Activated CD4-positive, alpha-beta memory T cell treated with anti-CD3 and anti-CD28 coated beads for 36 hours (primary cell): ENCODE measurements at regions of chr17 and their contacts with region 1.

Region 1: GRCh38 chr17:57783106-57783742 is 38.1 kb upstream of the CCDC182 start:
- DNase-seq: peak; percentile 86
- H3K4me3 Mint-ChIP-seq: no peak overlapping the region
- H3K27ac Mint-ChIP-seq: no peak overlapping the region
- H3K4me1 Mint-ChIP-seq: no peaks in the 10 kb centered on the region
- H3K27me3 Mint-ChIP-seq: peaks cover 19% of the 10 kb centered on the region

Region 2: DNA sequence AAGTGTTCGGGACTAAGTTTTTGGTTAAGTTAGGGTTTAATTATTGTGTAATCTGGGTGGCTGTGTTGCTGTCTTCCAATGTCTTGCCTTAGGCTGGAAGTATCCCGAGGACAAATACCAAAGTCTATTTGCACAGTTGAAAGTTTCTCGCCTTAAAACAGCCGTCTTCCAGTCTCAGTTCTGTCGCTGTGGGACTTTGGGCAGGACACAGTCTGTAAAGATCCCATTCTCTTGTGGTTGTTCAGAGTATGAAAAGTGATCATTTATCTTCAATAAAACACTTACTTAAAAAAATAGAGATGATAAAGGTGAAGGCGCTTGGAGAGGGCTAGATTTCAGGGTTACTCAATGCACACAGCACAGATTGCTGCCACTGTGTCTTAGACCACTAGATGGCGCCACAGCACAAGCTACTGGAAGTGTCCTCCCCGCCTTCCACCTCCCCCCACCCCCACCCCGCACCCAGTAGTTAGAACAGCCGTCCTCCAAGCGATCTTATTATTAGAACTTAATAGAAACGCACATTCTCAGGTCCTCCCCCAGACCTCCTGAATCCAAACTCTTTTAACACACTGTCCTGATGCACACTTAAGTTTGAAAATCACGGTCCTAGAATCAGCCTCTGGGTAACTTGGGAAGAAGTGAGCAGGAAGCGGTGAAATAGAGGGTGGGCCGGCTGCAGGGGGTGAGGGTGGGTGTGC is 652.3 kb before region 1 on chr17:
- CTCF ChIA-PET with region 1: interaction called, 7 read pairs
- POLR2A ChIA-PET with region 1: no interaction called
- intact Hi-C with region 1: loop called (anchors 2 kb)
- DNase-seq: peak; percentile 86
- H3K4me3 Mint-ChIP-seq: no peak overlapping the region
- H3K27ac Mint-ChIP-seq: no peak overlapping the region
- H3K4me1 Mint-ChIP-seq: peaks cover 4% of the 10 kb centered on the region
- H3K27me3 Mint-ChIP-seq: no peaks in the 10 kb centered on the region

Region 3: DNA sequence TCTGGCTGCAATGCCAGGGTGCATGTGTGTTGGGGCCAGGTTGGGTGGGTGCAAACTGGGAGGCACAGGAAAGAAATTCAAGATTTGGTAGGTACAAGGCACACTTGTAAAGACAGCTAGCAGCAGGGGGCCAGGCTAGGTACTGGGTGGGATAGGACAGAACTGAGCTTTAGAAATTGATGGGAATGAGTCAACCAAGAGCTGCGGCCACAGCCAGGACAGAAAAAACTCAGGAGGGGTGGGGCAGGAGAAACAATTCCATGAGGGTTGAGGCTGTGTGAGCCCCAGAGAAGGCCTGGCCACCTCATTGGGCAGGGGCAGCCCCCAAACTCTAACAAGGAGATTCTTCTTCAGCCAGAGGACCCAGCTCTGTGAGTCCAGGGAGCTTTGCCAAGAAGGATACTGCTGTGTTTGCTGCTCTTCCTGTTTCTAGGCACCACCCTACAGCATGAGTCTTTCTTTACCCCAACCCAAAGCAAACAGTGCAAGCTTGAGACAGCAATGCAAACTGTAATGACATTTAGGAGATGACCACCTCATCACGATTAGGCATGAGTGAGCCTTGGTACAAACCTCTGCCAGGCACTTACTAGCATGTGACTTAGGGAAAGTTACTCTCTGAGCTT is 16.8 kb before region 1 on chr17:
- CTCF ChIA-PET with region 1: interaction called, 13 read pairs
- POLR2A ChIA-PET with region 1: no interaction called
- intact Hi-C with region 1: no loop called
- DNase-seq: no peak
- H3K4me3 Mint-ChIP-seq: no peak overlapping the region
- H3K27ac Mint-ChIP-seq: no peak overlapping the region
- H3K4me1 Mint-ChIP-seq: no peaks in the 10 kb centered on the region
- H3K27me3 Mint-ChIP-seq: peaks cover 11% of the 10 kb centered on the region

Region 4: GRCh38 chr17:57772774-57773173 is 10.4 kb before region 1 on chr17:
- CTCF ChIA-PET with region 1: interaction called, 14 read pairs
- POLR2A ChIA-PET with region 1: no interaction called
- intact Hi-C with region 1: no loop called
- DNase-seq: no peak
- H3K4me3 Mint-ChIP-seq: no peak overlapping the region
- H3K27ac Mint-ChIP-seq: no peak overlapping the region
- H3K4me1 Mint-ChIP-seq: no peaks in the 10 kb centered on the region
- H3K27me3 Mint-ChIP-seq: peaks cover 35% of the 10 kb centered on the region

Region 5: GRCh38 chr17:57794841-57795240 is 11.6 kb after region 1 on chr17:
- CTCF ChIA-PET with region 1: interaction called, 33 read pairs
- POLR2A ChIA-PET with region 1: no interaction called
- intact Hi-C with region 1: no loop called
- DNase-seq: no peak
- H3K4me3 Mint-ChIP-seq: no peak overlapping the region
- H3K27ac Mint-ChIP-seq: no peak overlapping the region
- H3K4me1 Mint-ChIP-seq: peaks cover 9% of the 10 kb centered on the region
- H3K27me3 Mint-ChIP-seq: peaks cover 9% of the 10 kb centered on the region

Region 6: GRCh38 chr17:57803025-57803424 is 19.8 kb after region 1 on chr17:
- CTCF ChIA-PET with region 1: interaction called, 33 read pairs
- POLR2A ChIA-PET with region 1: no interaction called
- intact Hi-C with region 1: no loop called
- DNase-seq: no peak
- H3K4me3 Mint-ChIP-seq: no peak overlapping the region
- H3K27ac Mint-ChIP-seq: no peak overlapping the region
- H3K4me1 Mint-ChIP-seq: no peaks in the 10 kb centered on the region
- H3K27me3 Mint-ChIP-seq: peaks cover 16% of the 10 kb centered on the region

Region 7: GRCh38 chr17:57833179-57833939 is 50.1 kb after region 1 on chr17:
- CTCF ChIA-PET with region 1: interaction called, 27 read pairs
- POLR2A ChIA-PET with region 1: no interaction called
- intact Hi-C with region 1: no loop called
- DNase-seq: peak; percentile 73
- H3K4me3 Mint-ChIP-seq: no peak overlapping the region
- H3K27ac Mint-ChIP-seq: no peak overlapping the region
- H3K4me1 Mint-ChIP-seq: peaks cover 6% of the 10 kb centered on the region
- H3K27me3 Mint-ChIP-seq: no peaks in the 10 kb centered on the region